ENCODE measurements at regions of chr2 and their contacts with region 1.

Region 1: GRCh38 chr2:177332041-177332991 is 60.3 kb upstream of the AGPS start:
- DNase-seq: no peak
- ATAC-seq: peak; percentile 88

Region 2: DNA sequence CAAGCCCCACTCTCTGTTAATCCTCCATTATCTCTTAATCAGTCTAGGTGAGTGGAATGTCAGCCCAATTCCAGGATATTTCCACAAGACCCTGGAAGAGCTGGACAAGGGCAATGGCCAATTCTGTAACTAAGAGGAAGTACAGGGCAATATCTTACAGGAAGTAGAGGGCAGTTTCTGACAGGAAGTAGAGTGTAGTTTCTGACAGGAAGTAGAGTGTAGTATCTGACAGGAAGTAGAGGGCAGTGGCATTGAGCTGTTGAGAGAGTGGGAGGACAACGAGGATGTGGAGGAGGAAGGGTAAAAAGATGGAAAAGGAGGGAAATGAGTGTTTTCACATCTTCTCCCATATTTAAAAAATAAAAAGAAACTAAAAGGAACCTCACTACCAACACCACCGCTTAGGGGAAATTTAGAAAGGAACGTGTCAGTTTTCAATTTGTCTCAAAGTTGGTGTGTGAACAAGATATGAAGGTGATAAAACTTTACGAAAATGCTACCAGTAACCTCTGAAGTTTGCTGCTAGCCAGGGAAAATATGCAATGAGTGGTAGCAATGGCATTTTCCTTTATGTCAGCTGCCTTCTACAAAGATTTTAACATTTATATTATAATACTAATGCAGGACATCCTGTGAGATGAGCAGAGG is 550.6 kb before region 1 on chr2:
- intact Hi-C with region 1: no loop called
- DNase-seq: no peak
- ATAC-seq: no peak

Region 3: GRCh38 chr2:177164584-177165052 is 167.7 kb before region 1 on chr2:
- intact Hi-C with region 1: loop called (anchors 5 kb)
- DNase-seq: peak; percentile 94
- ATAC-seq: peak; percentile 94

Region 4: GRCh38 chr2:177263451-177264208 is 68.7 kb before region 1 on chr2:
- intact Hi-C with region 1: loop called (anchors 1 kb)
- DNase-seq: peak; percentile 99
- ATAC-seq: peak; percentile 90

Region 5: DNA sequence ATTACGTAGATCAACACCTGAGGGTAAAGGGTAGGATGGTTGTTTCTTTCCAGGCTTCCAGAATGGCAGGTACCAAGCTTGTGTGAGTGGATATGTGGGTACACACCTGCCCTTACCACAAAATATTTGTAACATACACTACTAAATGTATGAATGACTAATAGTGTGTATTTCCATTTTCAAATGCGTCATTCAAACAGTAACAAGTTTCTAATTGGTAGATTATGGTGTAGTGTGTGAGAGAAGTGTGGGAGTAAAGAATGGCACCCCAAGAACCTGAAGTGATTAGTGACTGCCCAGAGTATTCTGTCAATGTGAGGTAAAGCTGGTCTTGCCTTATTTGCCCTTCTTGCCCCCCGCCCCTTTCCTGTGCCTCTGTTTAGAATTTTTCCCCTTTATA is 81.4 kb after region 1 on chr2:
- intact Hi-C with region 1: loop called (anchors 5 kb)
- DNase-seq: no peak
- ATAC-seq: no peak

Region 6: GRCh38 chr2:177604271-177605065 is 272.2 kb after region 1 on chr2:
- intact Hi-C with region 1: loop called (anchors 5 kb)
- DNase-seq: no peak
- ATAC-seq: peak; percentile 89

Region 7: DNA sequence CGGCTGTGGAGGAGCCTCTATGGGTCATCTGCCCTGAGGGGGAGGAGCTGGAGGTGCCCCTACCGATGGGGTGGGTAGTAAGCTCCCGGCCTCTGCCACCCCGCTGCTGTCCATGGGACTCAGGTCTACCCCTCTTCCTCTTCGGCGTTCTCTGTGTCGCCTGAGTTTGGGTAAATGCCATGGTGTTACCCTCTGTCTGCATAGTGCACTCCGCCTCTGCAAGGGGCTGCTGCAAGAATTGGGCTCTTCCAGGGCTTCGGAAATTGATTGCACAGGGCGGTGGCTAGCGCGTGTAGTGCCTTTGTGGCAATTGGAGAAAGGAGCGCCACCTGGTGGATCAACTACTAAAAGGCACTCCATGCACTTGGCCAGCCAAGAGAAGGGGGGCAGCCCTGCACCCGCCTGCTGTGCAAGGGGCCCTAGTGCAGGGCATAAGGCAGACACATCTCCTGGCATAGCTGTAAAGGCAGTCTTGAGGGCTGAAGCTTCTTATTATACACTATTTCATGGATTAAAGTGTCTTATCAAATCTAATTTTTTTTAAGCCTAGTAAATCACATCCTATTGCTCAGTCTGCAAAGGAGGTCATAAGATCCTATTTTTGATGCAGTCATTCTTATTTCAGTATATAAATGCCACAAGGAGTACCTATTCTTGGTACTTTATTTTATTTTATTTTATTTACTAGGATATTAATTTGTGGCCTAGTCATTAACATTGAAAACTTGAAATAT is 431.4 kb after region 1 on chr2:
- intact Hi-C with region 1: loop called (anchors 5 kb)
- DNase-seq: peak; percentile 84
- ATAC-seq: peak; percentile 89

Measured in sciatic nerve (tissue), 2 donors.